Activated CD8-positive, alpha-beta T cell treated with anti-CD3 and anti-CD28 coated beads for 36 hours (primary cell): ENCODE measurements at regions of chr16 and their contacts with region 1.

Region 1: DNA sequence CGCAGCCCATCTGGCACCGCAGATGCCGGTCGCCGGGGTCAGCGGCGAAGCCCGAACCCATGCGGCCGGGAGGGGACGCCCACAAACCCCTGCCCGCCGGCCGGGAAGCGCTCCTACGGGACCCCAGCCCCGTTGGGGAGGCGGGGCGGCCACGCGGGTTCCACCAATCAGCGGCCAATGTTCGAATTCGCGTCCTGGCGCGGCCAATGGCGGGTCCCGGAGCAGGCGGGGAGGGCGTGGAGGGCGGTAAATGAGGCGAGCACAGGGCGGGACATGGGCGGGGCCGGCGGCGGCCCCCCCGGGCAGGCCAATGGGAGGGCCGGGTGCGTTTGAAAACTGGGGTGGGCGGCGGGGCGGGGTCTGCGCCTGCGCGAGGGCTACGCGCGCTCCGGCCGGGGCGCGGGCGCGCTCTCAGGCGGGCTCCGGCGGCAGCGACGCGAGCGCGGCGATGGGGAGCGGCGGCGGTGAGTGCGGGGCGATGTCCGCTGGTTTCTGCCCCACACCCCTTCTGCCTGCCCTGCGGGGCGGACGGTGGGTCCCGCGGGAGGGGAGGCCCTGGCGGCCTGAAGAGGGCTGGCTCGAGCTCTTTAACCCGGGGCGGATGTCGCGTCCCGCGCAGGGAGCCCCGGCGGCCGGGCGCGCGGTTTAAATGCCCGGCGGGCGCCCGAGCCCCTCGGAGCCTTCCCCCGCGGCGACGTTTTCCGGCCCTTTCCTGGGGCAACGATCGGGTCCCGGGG is at the start of gene CCNF:
- DNase-seq: peak; percentile 98
- ATAC-seq: peak; percentile 98
- H3K4me3 Mint-ChIP-seq: peak within 1 kb of the TSS; percentile 88
- H3K27ac Mint-ChIP-seq: peak within 1 kb of the TSS; percentile 77
- H3K4me1 Mint-ChIP-seq: peaks cover 15% of the 10 kb centered on the region
- H3K27me3 Mint-ChIP-seq: no peaks in the 10 kb centered on the region
- CTCF ChIP-seq: no peak
- total RNA-seq, gene CCNF: 43.5 TPM

Region 2: DNA sequence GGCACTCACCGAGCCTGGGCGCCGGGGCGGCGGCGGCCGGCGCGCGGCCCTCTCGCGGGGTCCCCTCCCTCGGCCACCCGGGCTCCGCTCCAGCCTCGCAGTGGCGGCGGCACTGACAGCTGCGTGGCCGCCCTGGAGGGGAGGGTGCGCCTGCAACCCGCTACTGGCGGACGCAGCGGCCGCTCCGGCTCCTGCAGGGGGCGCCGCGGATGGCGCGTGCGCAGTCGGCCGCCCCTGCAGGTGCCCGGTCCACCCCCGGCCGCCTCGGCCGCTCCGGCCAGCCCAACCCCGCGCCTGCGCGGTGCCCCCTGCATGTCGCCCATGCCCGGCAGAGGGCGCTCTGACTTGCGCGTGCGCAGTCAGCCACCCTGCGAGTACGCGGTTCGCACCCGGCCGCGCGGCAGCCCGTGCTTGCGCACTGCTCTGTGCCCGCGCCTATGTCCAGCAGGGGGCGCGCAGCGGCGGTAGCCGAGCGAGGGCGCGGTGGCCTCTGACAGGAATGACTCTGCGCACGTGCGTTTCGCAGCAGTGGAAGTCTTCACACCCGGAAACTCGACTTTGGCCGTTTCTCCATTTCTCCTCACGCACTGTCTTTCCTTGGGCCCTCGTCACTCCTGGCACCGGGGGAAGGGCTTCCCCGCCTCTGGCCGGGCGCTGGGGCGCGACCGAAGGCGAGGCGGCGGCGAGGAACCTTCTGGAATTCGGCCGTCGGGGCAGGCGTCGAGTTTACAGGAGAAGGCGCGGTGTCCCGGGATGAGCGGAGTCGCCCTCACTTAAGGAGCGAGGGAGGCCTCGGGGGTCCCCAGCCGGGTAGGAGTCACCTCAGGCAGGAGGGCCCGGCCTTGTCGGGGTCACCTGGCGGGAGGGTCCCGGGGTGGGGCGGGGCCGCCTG is 88.4 kb before region 1 on chr16 and contains the start of gene ABCA3:
- CTCF ChIA-PET with region 1: interaction called, 5 read pairs
- POLR2A ChIA-PET with region 1: no interaction called
- intact Hi-C with region 1: loop called (anchors 10 kb)
- DNase-seq: peak; percentile 94
- ATAC-seq: peak; percentile 89
- H3K4me3 Mint-ChIP-seq: peak within 1 kb of the TSS; percentile 78
- H3K27ac Mint-ChIP-seq: peak within 1 kb of the TSS; percentile 59
- H3K4me1 Mint-ChIP-seq: peaks cover 20% of the 10 kb centered on the region
- H3K27me3 Mint-ChIP-seq: peaks cover 8% of the 10 kb centered on the region
- CTCF ChIP-seq: peak; percentile 100
- total RNA-seq, gene ABCA3: 2.9 to 3.6 TPM

Region 3: DNA sequence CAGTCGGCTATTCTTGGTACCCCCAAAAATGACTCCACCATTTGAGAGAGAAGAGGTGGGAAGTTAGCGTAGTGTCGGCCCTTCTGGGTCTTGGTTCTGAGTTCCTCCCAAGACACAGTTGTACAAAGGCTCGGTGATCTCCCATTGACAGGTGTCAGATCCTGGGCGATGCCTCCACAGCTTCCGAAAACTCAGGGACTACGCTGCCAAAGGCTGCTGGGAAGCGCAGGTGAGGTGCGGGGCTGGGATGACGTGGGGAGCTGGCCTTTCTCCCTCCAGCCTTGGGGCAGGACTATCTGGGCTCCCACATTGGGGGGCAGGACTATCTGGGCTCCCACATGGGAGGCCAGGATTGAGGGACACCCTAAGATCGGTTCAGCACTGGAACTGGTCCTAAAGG is 10.4 kb after region 1 on chr16:
- CTCF ChIA-PET with region 1: interaction called, 12 read pairs
- POLR2A ChIA-PET with region 1: no interaction called
- intact Hi-C with region 1: no loop called
- DNase-seq: no peak
- ATAC-seq: no peak
- H3K4me3 Mint-ChIP-seq: no peak overlapping the region
- H3K27ac Mint-ChIP-seq: no peak overlapping the region
- H3K4me1 Mint-ChIP-seq: peaks cover 6% of the 10 kb centered on the region
- H3K27me3 Mint-ChIP-seq: no peaks in the 10 kb centered on the region
- CTCF ChIP-seq: no peak

Region 4: GRCh38 chr16:2459647-2460390 is 30.6 kb after region 1 on chr16 and contains the start of gene TEDC2:
- CTCF ChIA-PET with region 1: interaction called, 11 read pairs
- POLR2A ChIA-PET with region 1: interaction called, 4 read pairs
- intact Hi-C with region 1: no loop called
- DNase-seq: peak; percentile 99
- ATAC-seq: peak; percentile 99
- H3K4me3 Mint-ChIP-seq: peak within 1 kb of the TSS; percentile 73
- H3K27ac Mint-ChIP-seq: peak within 1 kb of the TSS; percentile 66
- H3K4me1 Mint-ChIP-seq: peaks cover 8% of the 10 kb centered on the region
- H3K27me3 Mint-ChIP-seq: no peaks in the 10 kb centered on the region
- CTCF ChIP-seq: no peak
- total RNA-seq, gene TEDC2: 23.2 to 30.7 TPM

Region 5: GRCh38 chr16:2500918-2501750 is 71.9 kb after region 1 on chr16:
- CTCF ChIA-PET with region 1: interaction called, 10 read pairs
- POLR2A ChIA-PET with region 1: interaction called, 4 read pairs
- intact Hi-C with region 1: loop called (anchors 10 kb)
- DNase-seq: peak; percentile 87
- ATAC-seq: peak; percentile 99
- H3K4me3 Mint-ChIP-seq: no peak overlapping the region
- H3K27ac Mint-ChIP-seq: no peak overlapping the region
- H3K4me1 Mint-ChIP-seq: no peaks in the 10 kb centered on the region
- H3K27me3 Mint-ChIP-seq: no peaks in the 10 kb centered on the region
- CTCF ChIP-seq: peak; percentile 89